ENCODE measurements at regions of chr5 and their contacts with region 1.

Region 1: GRCh38 chr5:72816311-72817145 is at the start of gene TNPO1:
- DNase-seq: peak; percentile 84
- ATAC-seq: peak; percentile 81
- H3K4me3 Mint-ChIP-seq: peak within 1 kb of the TSS; percentile 80
- H3K27ac Mint-ChIP-seq: peak within 1 kb of the TSS; percentile 87
- H3K4me1 Mint-ChIP-seq: peaks cover 18% of the 10 kb centered on the region
- H3K27me3 Mint-ChIP-seq: peaks cover 10% of the 10 kb centered on the region
- CTCF ChIP-seq: no peak
- total RNA-seq, gene TNPO1: 97.8 to 116 TPM

Region 2: GRCh38 chr5:72325566-72326305 is 490.8 kb before region 1 on chr5:
- CTCF ChIA-PET with region 1: no interaction called
- POLR2A ChIA-PET with region 1: no interaction called
- intact Hi-C with region 1: no loop called
- DNase-seq: no peak
- ATAC-seq: no peak
- H3K4me3 Mint-ChIP-seq: no peak overlapping the region
- H3K27ac Mint-ChIP-seq: no peak overlapping the region
- H3K4me1 Mint-ChIP-seq: peaks cover 21% of the 10 kb centered on the region
- H3K27me3 Mint-ChIP-seq: no peaks in the 10 kb centered on the region
- CTCF ChIP-seq: no peak

Region 3: DNA sequence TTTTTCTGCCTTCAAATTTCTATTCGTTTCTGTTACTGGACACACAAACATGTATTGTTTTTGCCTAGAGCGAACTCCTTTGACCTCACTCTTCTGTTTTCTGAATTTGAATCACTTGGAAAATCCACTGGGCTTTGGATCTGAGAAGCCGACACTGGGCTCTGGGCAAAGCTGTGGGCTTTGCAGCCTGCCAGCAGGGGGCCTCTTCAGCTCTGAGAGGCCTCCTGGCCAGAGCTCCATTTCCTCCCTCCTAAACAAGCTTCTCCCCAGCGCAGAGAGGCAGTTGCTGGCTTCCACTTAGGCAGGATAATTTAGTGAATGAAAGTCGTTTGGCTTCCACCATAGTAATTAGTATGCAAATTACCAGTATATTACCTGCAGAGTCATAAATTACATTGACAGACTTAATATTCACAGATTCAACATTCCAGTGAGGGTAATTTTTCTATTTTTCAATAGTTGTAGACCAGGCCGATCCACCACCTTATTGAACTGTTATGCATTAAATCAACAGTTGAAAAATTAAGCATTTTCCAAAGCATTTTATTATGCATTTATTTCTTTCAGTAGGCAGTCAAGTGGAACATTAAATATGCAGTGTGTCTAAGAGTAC is 205.3 kb before region 1 on chr5:
- CTCF ChIA-PET with region 1: interaction called, 38 read pairs
- POLR2A ChIA-PET with region 1: no interaction called
- intact Hi-C with region 1: no loop called
- DNase-seq: peak; percentile 55
- ATAC-seq: peak; percentile 69
- H3K4me3 Mint-ChIP-seq: no peak overlapping the region
- H3K27ac Mint-ChIP-seq: no peak overlapping the region
- H3K4me1 Mint-ChIP-seq: no peaks in the 10 kb centered on the region
- H3K27me3 Mint-ChIP-seq: peaks cover 7% of the 10 kb centered on the region
- CTCF ChIP-seq: peak; percentile 82

Region 4: DNA sequence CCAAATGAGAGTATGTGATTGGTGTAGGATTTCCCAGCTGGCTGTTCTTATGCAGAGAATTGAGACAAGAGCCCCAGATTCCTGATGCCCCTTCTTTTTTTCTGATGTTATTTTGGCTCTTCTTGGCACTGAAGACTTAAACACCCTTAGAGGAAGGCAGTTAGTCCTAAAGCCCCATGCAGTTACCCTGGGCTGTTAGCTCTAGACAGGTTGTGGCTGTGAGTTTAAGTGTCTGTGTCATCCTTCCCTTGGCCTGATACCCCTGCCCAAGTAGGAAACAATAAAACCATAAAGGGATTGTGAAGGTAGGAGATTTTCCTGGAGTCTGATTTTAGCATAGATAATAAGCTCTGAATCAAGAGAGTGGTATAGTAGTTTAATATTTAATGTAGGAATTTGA is 13.2 kb after region 1 on chr5:
- CTCF ChIA-PET with region 1: interaction called, 29 read pairs
- POLR2A ChIA-PET with region 1: interaction called, 7 read pairs
- intact Hi-C with region 1: no loop called
- DNase-seq: no peak
- ATAC-seq: no peak
- H3K4me3 Mint-ChIP-seq: no peak overlapping the region
- H3K27ac Mint-ChIP-seq: no peak overlapping the region
- H3K4me1 Mint-ChIP-seq: no peaks in the 10 kb centered on the region
- H3K27me3 Mint-ChIP-seq: no peaks in the 10 kb centered on the region
- CTCF ChIP-seq: no peak

Region 5: DNA sequence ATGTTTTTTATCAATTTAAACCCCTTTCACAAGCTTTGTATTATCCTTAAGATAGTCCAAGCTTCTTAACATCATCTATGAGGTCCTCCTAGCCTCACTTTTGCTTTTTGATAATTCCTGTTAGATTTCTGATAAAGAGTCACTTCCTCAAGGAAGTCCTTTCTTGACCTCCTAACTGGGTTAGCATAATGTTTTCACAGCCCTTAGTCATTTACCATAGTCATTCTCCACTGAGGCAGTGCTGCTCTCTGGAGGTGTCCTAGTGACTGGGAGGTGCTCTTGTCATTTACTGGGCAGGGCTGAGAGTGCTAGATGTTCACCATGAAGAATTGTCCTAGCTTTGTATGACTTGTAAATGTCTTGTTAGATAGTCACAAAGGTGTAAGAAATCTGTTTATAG is 26.3 kb after region 1 on chr5:
- CTCF ChIA-PET with region 1: interaction called, 12 read pairs
- POLR2A ChIA-PET with region 1: interaction called, 23 read pairs
- intact Hi-C with region 1: no loop called
- DNase-seq: peak; percentile 22
- ATAC-seq: peak; percentile 87
- H3K4me3 Mint-ChIP-seq: no peak overlapping the region
- H3K27ac Mint-ChIP-seq: no peak overlapping the region
- H3K4me1 Mint-ChIP-seq: peaks cover 26% of the 10 kb centered on the region
- H3K27me3 Mint-ChIP-seq: no peaks in the 10 kb centered on the region
- CTCF ChIP-seq: no peak

Region 6: GRCh38 chr5:72847989-72848473 is 31.5 kb after region 1 on chr5:
- CTCF ChIA-PET with region 1: interaction called, 16 read pairs
- POLR2A ChIA-PET with region 1: interaction called, 23 read pairs
- intact Hi-C with region 1: no loop called
- DNase-seq: peak; percentile 92
- ATAC-seq: peak; percentile 84
- H3K4me3 Mint-ChIP-seq: peak overlapping the region; percentile 99
- H3K27ac Mint-ChIP-seq: peak overlapping the region; percentile 99
- H3K4me1 Mint-ChIP-seq: peaks cover 47% of the 10 kb centered on the region
- H3K27me3 Mint-ChIP-seq: no peaks in the 10 kb centered on the region
- CTCF ChIP-seq: no peak

Region 7: GRCh38 chr5:72860499-72860898 is 44.0 kb after region 1 on chr5:
- CTCF ChIA-PET with region 1: interaction called, 3 read pairs
- POLR2A ChIA-PET with region 1: interaction called, 10 read pairs
- intact Hi-C with region 1: no loop called
- DNase-seq: no peak
- ATAC-seq: no peak
- H3K4me3 Mint-ChIP-seq: no peak overlapping the region
- H3K27ac Mint-ChIP-seq: no peak overlapping the region
- H3K4me1 Mint-ChIP-seq: peaks cover 37% of the 10 kb centered on the region
- H3K27me3 Mint-ChIP-seq: no peaks in the 10 kb centered on the region
- CTCF ChIP-seq: no peak